Activated naive CD8-positive, alpha-beta T cell treated with anti-CD3 and anti-CD28 coated beads, Interleukin-2, amount 10 ng/mL, durations not matched to agents 7 days and 5 days (primary cell): ENCODE measurements at regions of chr16 and their contacts with region 1.

Region 1: DNA sequence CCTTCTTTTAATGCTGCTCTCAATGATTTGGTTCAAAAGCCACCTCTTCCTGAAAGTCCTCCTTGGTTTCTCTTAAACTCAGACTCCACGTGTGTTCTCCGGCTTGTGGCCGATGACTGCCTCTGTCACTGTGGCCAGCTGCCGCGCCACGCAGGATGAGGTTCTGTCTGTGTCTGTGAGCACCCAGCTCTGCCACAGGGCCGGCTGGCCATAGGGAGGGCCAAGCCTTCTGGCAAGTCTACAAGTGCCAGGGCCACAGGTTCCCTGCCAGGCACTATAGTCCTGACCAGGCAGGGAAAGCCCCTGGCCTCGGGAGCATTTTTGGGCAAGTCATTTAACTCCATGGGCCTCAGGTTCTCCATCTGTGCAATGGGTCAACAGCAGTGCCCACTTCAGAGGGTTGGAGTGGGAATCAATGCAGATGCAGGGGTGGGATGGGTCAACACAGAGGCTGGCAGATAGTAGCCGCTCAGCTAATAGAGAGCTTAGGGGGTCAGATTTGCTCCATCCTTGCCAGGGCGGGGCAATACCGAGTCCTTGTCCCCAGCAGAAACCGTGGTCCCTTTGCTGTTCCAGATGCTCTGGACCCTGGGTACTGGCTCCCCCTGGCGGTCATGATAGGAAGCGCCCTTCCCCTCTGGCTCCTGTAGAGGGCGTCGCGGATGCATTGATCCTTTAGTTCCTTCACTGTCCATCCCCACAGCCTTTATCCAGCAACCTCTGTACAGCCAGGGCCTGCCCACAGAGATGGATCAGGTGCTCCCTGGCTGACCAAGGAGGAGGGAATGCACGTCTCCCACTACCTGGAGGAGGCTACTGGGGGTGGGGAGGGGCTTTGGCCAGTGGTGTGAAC is 19.3 kb upstream of the ADGRG3 start:
- DNase-seq: peak; percentile 93
- ATAC-seq: peak; percentile 57
- H3K4me3 Mint-ChIP-seq: peak overlapping the region; percentile 49
- H3K27ac Mint-ChIP-seq: peak overlapping the region; percentile 87
- H3K4me1 Mint-ChIP-seq: peaks cover 40% of the 10 kb centered on the region
- H3K27me3 Mint-ChIP-seq: no peaks in the 10 kb centered on the region

Region 2: GRCh38 chr16:57591086-57591869 is 57.5 kb before region 1 on chr16:
- POLR2A ChIA-PET with region 1: interaction called, 48 read pairs
- DNase-seq: peak; percentile 78
- ATAC-seq: peak; percentile 73
- H3K4me3 Mint-ChIP-seq: peak overlapping the region; percentile 77
- H3K27ac Mint-ChIP-seq: peak overlapping the region; percentile 93
- H3K4me1 Mint-ChIP-seq: peaks cover 53% of the 10 kb centered on the region
- H3K27me3 Mint-ChIP-seq: no peaks in the 10 kb centered on the region

Region 3: GRCh38 chr16:57600048-57600835 is 48.6 kb before region 1 on chr16:
- POLR2A ChIA-PET with region 1: interaction called, 14 read pairs
- DNase-seq: peak; percentile 61
- ATAC-seq: no peak
- H3K4me3 Mint-ChIP-seq: no peak overlapping the region
- H3K27ac Mint-ChIP-seq: peak overlapping the region; percentile 79
- H3K4me1 Mint-ChIP-seq: peaks cover 52% of the 10 kb centered on the region
- H3K27me3 Mint-ChIP-seq: no peaks in the 10 kb centered on the region

Region 4: GRCh38 chr16:57609541-57610401 is 39.0 kb before region 1 on chr16:
- POLR2A ChIA-PET with region 1: interaction called, 13 read pairs
- DNase-seq: peak; percentile 66
- ATAC-seq: peak; percentile 93
- H3K4me3 Mint-ChIP-seq: peak overlapping the region; percentile 67
- H3K27ac Mint-ChIP-seq: peak overlapping the region; percentile 93
- H3K4me1 Mint-ChIP-seq: peaks cover 51% of the 10 kb centered on the region
- H3K27me3 Mint-ChIP-seq: no peaks in the 10 kb centered on the region

Region 5: GRCh38 chr16:57775661-57776469 is 127.0 kb after region 1 on chr16:
- POLR2A ChIA-PET with region 1: no interaction called
- DNase-seq: no peak
- ATAC-seq: no peak
- H3K4me3 Mint-ChIP-seq: no peak overlapping the region
- H3K27ac Mint-ChIP-seq: no peak overlapping the region
- H3K4me1 Mint-ChIP-seq: no peaks in the 10 kb centered on the region
- H3K27me3 Mint-ChIP-seq: peaks cover 3% of the 10 kb centered on the region